ENCODE measurements at regions of chr7 and their contacts with region 1.

Region 1: GRCh38 chr7:81297321-81297720 is 378.5 kb upstream of the SEMA3C start:
- DNase-seq: no peak
- H3K4me3 ChIP-seq: no peak overlapping the region
- H3K27ac ChIP-seq: no peak overlapping the region
- H3K4me1 ChIP-seq: peaks cover 19% of the 10 kb centered on the region
- H3K27me3 ChIP-seq: peaks cover 39% of the 10 kb centered on the region
- CTCF ChIP-seq: no peak

Region 2: DNA sequence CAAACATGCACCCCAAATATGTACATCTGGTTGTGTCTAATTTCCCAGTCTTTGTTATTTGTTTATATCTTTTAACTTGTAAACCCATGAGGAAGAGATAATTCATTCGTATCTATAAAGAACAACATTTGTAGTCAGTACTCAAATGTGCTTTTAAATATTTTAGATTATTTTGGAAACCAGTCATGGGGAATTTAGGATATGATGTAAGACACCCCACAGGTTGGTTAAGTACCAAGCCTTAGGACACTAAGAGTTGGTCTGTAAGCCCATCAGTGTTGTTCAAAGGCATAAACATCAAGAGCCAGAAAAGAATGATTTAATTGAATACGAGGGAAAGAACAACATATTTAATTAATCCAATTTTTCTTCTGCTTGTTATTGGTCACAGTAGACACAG is 42.6 kb after region 1 on chr7:
- CTCF ChIA-PET with region 1: no interaction called
- POLR2A ChIA-PET with region 1: no interaction called
- intact Hi-C with region 1: loop called (anchors 2 kb)
- DNase-seq: peak; percentile 5
- H3K4me3 ChIP-seq: no peak overlapping the region
- H3K27ac ChIP-seq: no peak overlapping the region
- H3K4me1 ChIP-seq: no peaks in the 10 kb centered on the region
- H3K27me3 ChIP-seq: no peaks in the 10 kb centered on the region
- CTCF ChIP-seq: no peak

Region 3: DNA sequence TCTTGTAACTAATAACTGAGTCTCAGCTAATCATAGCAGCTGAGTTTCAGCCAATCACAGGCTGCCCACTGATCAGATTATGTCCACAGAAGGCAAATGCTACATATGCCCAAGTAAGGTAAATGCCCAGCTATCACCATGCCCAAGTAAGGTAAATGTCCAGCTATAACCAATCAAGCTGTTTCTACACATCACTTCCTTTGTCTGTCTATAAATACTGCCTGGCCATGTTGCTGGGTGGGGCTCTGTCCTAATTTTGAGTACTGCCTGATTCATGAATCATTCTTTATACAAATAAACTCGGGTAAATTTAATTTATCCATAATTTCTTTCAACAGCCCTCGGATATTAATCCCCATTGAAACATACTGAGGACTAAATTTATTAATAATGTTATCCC is 833.9 kb after region 1 on chr7:
- CTCF ChIA-PET with region 1: no interaction called
- POLR2A ChIA-PET with region 1: no interaction called
- intact Hi-C with region 1: no loop called
- DNase-seq: no peak
- H3K4me3 ChIP-seq: no peak overlapping the region
- H3K27ac ChIP-seq: no peak overlapping the region
- H3K4me1 ChIP-seq: no peaks in the 10 kb centered on the region
- H3K27me3 ChIP-seq: no peaks in the 10 kb centered on the region
- CTCF ChIP-seq: no peak